CD8-positive, alpha-beta T cell (primary cell): ENCODE measurements at regions of chr15 and their contacts with region 1.

Region 1: GRCh38 chr15:98787936-98788757 is 139.8 kb downstream of the IGF1R start:
- DNase-seq: no peak
- ATAC-seq: no peak
- H3K4me3 ChIP-seq: no peak overlapping the region
- H3K4me3 Mint-ChIP-seq: no peak overlapping the region
- H3K27ac ChIP-seq: no peak overlapping the region
- H3K27ac Mint-ChIP-seq: peak overlapping the region; percentile 11
- H3K4me1 ChIP-seq: peaks cover 21% of the 10 kb centered on the region
- H3K4me1 Mint-ChIP-seq: peaks cover 59% of the 10 kb centered on the region
- H3K27me3 ChIP-seq: no peaks in the 10 kb centered on the region
- H3K27me3 Mint-ChIP-seq: no peaks in the 10 kb centered on the region
- CTCF ChIP-seq: no peak

Region 2: GRCh38 chr15:98745650-98746622 is 42.2 kb before region 1 on chr15:
- CTCF ChIA-PET with region 1: no interaction called
- POLR2A ChIA-PET with region 1: no interaction called
- intact Hi-C with region 1: no loop called
- DNase-seq: no peak
- ATAC-seq: no peak
- H3K4me3 ChIP-seq: no peak overlapping the region
- H3K4me3 Mint-ChIP-seq: no peak overlapping the region
- H3K27ac ChIP-seq: no peak overlapping the region
- H3K27ac Mint-ChIP-seq: no peak overlapping the region
- H3K4me1 ChIP-seq: peaks cover 19% of the 10 kb centered on the region
- H3K4me1 Mint-ChIP-seq: peaks cover 62% of the 10 kb centered on the region
- H3K27me3 ChIP-seq: no peaks in the 10 kb centered on the region
- H3K27me3 Mint-ChIP-seq: no peaks in the 10 kb centered on the region
- CTCF ChIP-seq: no peak

Region 3: GRCh38 chr15:98850961-98851573 is 62.9 kb after region 1 on chr15:
- CTCF ChIA-PET with region 1: interaction called, 4 read pairs
- POLR2A ChIA-PET with region 1: no interaction called
- intact Hi-C with region 1: loop called in 1 of 2 experiments (anchors 2 kb)
- DNase-seq: peak; percentile 34 to 83 (median 64)
- ATAC-seq: peak; percentile 67
- H3K4me3 ChIP-seq: peak overlapping the region in 1 of 2 experiments; percentile 59
- H3K4me3 Mint-ChIP-seq: peak overlapping the region; percentile 94
- H3K27ac ChIP-seq: peak overlapping the region in 1 of 2 experiments; percentile 70
- H3K27ac Mint-ChIP-seq: peak overlapping the region; percentile 94
- H3K4me1 ChIP-seq: peaks cover 31% of the 10 kb centered on the region
- H3K4me1 Mint-ChIP-seq: peaks cover 54% of the 10 kb centered on the region
- H3K27me3 ChIP-seq: no peaks in the 10 kb centered on the region
- H3K27me3 Mint-ChIP-seq: no peaks in the 10 kb centered on the region
- CTCF ChIP-seq: peak; percentile 68